Activated B cell treated with CpG ODN at 0.5 μM for 24 hours (primary cell): ENCODE measurements at regions of chr20 and their contacts with region 1.

Region 1: DNA sequence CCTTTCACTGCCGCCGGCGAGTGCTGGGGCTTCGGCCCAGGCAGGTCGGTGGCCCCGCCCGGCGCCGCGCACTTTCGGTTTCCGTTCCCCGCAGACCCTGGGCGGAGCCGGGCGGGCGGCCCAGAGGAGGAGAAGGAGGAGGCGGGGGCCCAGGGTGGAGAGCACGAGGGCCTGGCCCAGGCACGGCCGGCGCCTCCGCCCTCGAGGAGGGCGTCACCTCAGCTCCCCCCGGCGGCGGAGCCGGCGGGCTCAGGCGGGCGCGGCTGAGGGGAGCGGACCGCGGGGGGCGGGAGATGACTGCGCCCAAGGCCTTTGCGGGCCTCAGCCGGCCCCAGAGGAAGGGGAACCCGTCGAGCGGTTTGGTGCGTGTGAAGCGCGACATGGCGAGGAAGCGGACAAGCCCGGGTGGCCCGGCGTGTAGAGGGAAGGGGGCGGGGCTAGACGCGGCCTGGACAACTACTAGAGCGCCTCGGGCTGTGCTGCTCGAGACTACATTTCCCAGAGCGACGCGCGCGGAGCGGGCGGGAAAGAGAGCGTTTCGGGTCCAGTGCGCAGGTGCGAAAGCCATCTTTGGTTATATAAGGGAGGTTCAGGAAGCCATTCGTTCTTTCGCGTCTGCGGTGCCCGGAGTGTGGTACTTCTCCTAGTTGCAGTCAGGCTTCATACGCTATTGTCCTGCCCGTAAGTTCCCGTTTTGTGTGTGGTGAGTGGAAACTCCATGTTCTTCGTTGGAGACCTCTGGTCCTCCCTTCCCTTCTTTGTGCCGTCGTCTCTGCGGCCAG is at the start of gene ZNFX1:
- DNase-seq: peak; percentile 96
- ATAC-seq: peak; percentile 81
- H3K4me3 Mint-ChIP-seq: peak within 1 kb of the TSS; percentile 98
- H3K27ac Mint-ChIP-seq: peak within 1 kb of the TSS; percentile 98
- H3K4me1 Mint-ChIP-seq: peaks cover 66% of the 10 kb centered on the region
- H3K27me3 Mint-ChIP-seq: no peaks in the 10 kb centered on the region
- CTCF ChIP-seq: no peak
- total RNA-seq, gene ZNFX1: 49.6 and 51.9 TPM in 2 replicates

Region 2: DNA sequence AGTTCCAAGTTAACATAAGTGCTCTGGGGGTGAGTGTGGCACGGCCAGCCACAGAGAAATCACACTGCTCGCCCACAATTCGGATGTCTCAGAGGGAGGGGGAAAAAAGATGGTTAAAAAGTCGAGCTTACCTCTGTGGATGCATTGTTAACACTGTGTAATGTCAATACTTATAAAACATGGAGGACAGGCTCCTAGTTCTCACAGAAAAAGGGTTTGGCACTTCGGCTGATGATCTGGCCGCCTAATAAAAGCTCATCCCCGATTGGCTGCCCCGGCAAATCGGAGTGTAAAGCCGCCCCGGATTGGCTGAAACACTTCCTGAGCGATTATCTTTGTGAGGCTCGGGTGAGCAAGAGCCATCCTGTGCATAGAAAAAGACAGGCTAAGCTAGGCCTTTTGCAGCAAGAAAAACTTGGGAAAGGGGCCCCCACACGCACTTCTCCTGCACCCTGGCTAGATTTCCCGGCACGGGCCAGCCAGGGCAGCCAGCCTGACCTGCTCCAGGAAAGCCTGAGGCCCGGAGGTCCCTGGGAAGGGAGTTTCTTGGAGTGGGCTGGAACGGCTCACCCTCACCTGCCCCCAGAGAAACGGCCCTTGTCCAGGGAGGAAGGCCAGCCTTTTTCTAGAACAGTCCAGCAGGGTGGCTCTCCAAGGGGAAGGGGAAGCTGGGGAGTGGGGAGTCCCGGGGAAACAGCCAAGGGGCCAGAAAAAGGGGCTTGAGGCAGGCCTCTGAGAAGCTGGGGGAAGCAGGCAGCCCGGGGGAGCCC is 1921.5 kb before region 1 on chr20 and contains the start of gene ZMYND8:
- CTCF ChIA-PET with region 1: no interaction called
- POLR2A ChIA-PET with region 1: no interaction called
- intact Hi-C with region 1: loop called (anchors 5 kb)
- DNase-seq: peak; percentile 96
- ATAC-seq: peak; percentile 81
- H3K4me3 Mint-ChIP-seq: no peak within 1 kb of the TSS
- H3K27ac Mint-ChIP-seq: no peak within 1 kb of the TSS
- H3K4me1 Mint-ChIP-seq: peaks cover 55% of the 10 kb centered on the region
- H3K27me3 Mint-ChIP-seq: no peaks in the 10 kb centered on the region
- CTCF ChIP-seq: no peak
- total RNA-seq, gene ZMYND8: 42.6 and 44.7 TPM in 2 replicates

Region 3: DNA sequence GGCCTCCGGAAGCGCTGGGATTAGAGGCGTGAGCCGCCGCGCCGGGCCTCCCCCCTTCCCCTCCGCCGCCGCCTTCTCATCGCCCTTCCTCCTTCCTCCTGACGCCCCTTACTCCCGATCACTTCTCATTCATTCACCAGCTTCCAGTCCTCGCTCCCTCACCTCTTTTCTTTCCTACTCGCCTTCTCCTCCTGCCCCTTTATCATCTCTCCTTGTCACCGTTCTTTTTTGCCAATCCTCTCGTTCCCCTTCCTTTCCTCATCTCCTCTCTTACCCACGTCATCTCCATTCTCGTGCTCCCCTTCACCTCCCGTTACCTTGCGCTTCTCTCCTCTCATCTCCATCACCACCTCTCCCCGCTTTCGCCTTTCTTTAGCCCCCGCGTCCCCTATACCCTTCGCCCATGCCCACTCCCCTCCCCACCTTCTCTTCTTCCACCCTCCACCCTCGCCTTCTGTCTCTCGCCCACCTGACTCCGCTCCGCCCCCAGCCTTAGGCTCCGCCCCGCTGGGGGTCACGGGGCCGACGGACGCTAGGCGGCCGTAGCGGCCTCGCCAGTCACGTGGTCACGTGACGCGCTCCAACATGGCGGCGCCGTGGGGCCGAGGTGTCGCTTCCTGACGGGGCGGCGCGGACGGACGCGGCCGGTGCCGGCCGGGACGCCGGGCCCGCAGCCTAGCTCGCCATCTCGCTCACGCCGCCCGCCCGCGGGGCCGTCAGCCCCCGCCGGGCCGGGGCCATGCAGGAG is 356.9 kb before region 1 on chr20 and contains the start of gene ARFGEF2:
- CTCF ChIA-PET with region 1: no interaction called
- POLR2A ChIA-PET with region 1: no interaction called
- intact Hi-C with region 1: loop called (anchors 2 kb)
- DNase-seq: peak; percentile 96
- ATAC-seq: peak; percentile 90
- H3K4me3 Mint-ChIP-seq: peak within 1 kb of the TSS; percentile 93
- H3K27ac Mint-ChIP-seq: peak within 1 kb of the TSS; percentile 95
- H3K4me1 Mint-ChIP-seq: peaks cover 58% of the 10 kb centered on the region
- H3K27me3 Mint-ChIP-seq: no peaks in the 10 kb centered on the region
- CTCF ChIP-seq: no peak
- total RNA-seq, gene ARFGEF2: 30.8 and 39.0 TPM in 2 replicates

Region 4: DNA sequence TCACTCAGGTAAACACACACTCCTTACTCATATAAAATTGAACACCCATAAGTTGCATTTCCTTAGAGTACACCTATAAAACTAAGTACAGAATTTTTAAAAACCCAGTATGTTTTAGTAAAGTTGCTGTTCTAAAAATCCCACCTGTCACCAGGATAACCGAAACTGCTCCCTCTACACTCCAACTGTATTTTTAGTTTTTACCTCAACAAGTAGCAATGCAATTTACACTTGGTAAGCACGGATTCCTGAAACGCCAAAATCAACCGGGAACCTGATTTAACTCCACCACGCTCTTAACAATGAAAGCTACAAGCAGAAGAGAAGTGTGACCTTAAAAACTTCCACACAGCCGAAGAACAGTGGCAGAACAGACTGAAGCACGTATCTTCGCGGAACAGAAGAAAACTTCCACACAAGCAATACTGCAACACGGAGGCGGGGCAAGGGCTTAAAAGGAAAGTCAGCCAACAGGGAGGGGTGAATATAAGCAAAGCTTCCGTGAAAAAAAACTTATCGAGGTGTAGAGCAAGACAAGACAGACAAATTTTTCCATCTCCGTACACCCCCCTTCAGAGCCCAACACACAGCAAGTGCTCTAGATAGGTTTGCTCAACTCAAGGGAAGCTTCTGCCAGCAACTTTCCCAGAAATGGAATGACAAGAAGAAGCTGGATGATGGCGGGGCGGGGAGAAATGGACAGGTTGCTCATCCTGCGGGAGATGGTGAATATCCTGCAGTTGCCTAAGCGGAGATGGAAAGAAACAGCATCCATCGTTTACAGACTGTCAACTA is 91.5 kb before region 1 on chr20:
- CTCF ChIA-PET with region 1: no interaction called
- POLR2A ChIA-PET with region 1: interaction called, 3 read pairs
- intact Hi-C with region 1: loop called (anchors 1 kb)
- DNase-seq: no peak
- ATAC-seq: peak; percentile 4
- H3K4me3 Mint-ChIP-seq: peak overlapping the region; percentile 85
- H3K27ac Mint-ChIP-seq: peak overlapping the region; percentile 77
- H3K4me1 Mint-ChIP-seq: peaks cover 54% of the 10 kb centered on the region
- H3K27me3 Mint-ChIP-seq: peaks cover 7% of the 10 kb centered on the region
- CTCF ChIP-seq: no peak

Region 5: GRCh38 chr20:49230561-49231193 is 47.5 kb before region 1 on chr20:
- CTCF ChIA-PET with region 1: no interaction called
- POLR2A ChIA-PET with region 1: interaction called, 5 read pairs
- intact Hi-C with region 1: loop called (anchors 5 kb)
- DNase-seq: no peak
- ATAC-seq: peak; percentile 99
- H3K4me3 Mint-ChIP-seq: peak overlapping the region; percentile 41
- H3K27ac Mint-ChIP-seq: peak overlapping the region; percentile 86
- H3K4me1 Mint-ChIP-seq: peaks cover 15% of the 10 kb centered on the region
- H3K27me3 Mint-ChIP-seq: no peaks in the 10 kb centered on the region
- CTCF ChIP-seq: no peak

Region 6: DNA sequence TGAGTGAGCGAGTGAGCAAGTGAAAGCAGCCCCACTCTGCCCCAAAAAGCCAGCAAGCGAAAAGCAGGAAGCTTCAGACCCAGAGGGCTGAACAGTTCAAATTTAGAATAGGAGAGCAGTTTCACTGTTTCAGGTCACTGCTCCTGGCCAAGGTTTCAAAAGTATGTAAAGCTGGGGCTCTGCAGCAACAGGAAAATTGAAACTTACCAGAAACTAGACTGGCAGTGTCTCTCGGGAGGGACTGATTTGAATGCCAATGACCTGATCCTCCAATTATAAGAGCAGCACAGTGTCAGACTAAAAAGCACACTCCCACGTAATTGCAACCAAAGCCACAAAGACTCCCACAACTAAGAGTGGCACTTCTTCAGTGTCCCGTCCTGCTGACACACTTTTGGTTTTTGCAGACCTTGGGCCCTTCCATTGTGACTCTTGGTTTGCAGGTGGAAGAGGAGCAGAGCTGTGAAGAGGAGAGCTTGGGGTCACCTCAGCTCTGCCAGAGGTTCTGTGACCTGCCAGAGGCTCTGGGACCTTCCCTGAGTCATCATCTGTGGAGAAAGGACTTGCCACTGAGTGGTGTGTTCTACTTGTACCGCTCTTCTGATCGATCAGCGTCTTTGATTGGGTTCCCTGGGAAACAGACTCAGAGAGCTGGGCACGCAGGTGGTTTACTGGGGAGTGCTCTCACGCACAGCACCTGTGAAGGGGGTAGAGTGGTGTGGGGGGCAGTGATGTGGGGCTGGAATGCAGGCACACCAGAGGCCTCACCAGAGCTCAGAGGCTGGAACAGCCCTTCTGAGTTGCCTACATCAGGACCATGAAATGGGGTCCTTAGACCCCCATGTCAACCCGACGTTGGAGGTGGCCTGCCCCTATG is 342.4 kb after region 1 on chr20:
- CTCF ChIA-PET with region 1: no interaction called
- POLR2A ChIA-PET with region 1: no interaction called
- intact Hi-C with region 1: no loop called
- DNase-seq: peak; percentile 42
- ATAC-seq: peak; percentile 87
- H3K4me3 Mint-ChIP-seq: no peak overlapping the region
- H3K27ac Mint-ChIP-seq: no peak overlapping the region
- H3K4me1 Mint-ChIP-seq: peaks cover 14% of the 10 kb centered on the region
- H3K27me3 Mint-ChIP-seq: peaks cover 3% of the 10 kb centered on the region
- CTCF ChIP-seq: no peak

Region 7: GRCh38 chr20:49936153-49937027 is 658.2 kb after region 1 on chr20 and contains the start of gene RNF114:
- CTCF ChIA-PET with region 1: no interaction called
- POLR2A ChIA-PET with region 1: interaction called, 9 read pairs
- intact Hi-C with region 1: loop called (anchors 1 kb)
- DNase-seq: peak; percentile 83
- ATAC-seq: peak; percentile 90
- H3K4me3 Mint-ChIP-seq: peak within 1 kb of the TSS; percentile 97
- H3K27ac Mint-ChIP-seq: peak within 1 kb of the TSS; percentile 88
- H3K4me1 Mint-ChIP-seq: peaks cover 58% of the 10 kb centered on the region
- H3K27me3 Mint-ChIP-seq: no peaks in the 10 kb centered on the region
- CTCF ChIP-seq: no peak
- total RNA-seq, gene RNF114: 56.5 and 56.6 TPM in 2 replicates